ENCODE measurements at regions of chr7 and their contacts with region 1.

Region 1: DNA sequence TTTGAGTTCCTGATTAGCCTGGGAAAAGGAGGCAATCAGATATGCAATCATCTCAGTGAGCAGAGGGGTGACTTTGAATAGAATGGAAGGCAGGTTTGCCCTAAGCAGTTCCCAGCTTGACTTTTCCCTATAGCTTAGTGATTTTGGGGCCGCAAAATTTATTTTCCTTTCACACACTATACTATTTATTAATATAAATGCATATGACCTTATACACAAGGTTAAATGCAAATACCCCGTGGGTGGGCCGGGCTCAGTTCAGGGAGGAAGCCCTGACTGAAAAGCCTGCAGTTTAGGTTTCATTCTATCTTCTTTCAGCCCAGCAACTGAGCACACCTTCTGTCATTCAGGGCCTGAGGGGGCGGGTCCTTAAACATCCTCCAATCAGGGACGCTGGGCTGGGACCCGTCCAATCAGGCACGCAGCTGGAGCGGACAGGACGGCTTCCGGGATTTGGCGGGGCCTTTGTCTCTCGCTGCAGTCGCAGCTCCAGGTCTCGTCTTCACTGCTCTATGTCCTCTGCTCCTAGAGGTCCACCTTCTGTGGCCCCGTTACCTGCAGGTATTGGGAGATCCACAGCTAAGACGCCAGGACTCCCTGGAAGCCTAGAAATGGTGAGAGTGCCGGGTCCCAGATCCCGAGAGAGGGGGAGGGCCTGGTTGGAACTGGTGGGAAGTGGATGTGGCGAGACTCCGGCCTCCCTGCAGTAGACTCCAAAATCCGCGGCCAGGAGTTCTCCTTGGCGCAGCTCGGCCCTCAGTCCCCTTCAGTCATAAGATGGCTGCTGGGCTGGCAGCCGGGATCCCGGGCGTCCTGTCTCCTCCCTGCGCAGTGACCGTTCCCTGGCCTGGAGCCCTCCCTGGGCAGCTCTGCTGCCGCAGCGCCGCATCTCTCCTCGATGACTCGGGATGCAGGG is at the start of gene ZNF273:
- H3K4me3 ChIP-seq: peak within 1 kb of the TSS; percentile 78
- H3K27ac ChIP-seq: peak within 1 kb of the TSS; percentile 74
- H3K4me1 ChIP-seq: peaks cover 5% of the 10 kb centered on the region
- CTCF ChIP-seq: no peak

Region 2: DNA sequence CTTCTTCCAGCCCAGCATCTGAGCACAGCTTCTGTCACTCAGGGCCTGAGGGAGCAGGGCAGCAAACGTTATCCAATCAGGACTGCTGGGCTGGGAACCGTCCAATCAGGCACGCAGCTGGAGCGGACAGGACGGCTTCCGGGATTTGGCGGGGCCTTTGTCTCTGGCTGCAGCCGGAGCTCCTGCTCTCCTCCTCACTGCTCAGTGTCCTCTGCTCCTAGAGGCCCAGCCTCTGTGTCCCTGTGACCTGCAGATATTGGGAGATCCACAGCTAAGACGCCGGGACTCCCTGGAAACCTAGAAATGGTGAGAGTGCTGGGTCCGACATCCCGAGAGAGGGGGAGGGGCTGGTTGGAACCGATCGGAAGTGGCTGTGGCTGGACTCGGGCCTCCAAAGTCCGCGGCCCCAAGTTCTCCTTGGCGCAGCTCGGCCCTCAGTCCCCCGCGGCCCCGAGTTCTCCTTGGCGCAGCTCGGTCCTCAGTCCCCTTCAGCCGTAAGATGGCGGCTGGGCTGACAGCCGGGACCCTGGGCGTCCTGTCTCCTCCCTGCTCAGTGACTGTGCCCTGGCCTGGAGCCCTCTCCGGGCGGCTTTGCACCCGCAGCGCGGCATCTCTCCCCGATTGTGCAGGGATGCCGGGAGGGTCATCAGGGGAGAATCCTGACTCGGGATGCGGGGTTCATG is 236.9 kb before region 1 on chr7 and contains the start of gene ZNF107:
- CTCF ChIA-PET with region 1: no interaction called
- POLR2A ChIA-PET with region 1: interaction called, 11 read pairs
- H3K4me3 ChIP-seq: peak within 1 kb of the TSS; percentile 54
- H3K27ac ChIP-seq: peak within 1 kb of the TSS; percentile 75
- H3K4me1 ChIP-seq: peaks cover 3% of the 10 kb centered on the region; the same call in 1 of the 2 replicates
- CTCF ChIP-seq: no peak

Region 3: GRCh38 chr7:64832136-64832535 is 70.9 kb before region 1 on chr7:
- CTCF ChIA-PET with region 1: no interaction called
- POLR2A ChIA-PET with region 1: no interaction called
- H3K4me3 ChIP-seq: no peak overlapping the region
- H3K27ac ChIP-seq: no peak overlapping the region
- H3K4me1 ChIP-seq: no peaks in the 10 kb centered on the region
- CTCF ChIP-seq: no peak

Region 4: DNA sequence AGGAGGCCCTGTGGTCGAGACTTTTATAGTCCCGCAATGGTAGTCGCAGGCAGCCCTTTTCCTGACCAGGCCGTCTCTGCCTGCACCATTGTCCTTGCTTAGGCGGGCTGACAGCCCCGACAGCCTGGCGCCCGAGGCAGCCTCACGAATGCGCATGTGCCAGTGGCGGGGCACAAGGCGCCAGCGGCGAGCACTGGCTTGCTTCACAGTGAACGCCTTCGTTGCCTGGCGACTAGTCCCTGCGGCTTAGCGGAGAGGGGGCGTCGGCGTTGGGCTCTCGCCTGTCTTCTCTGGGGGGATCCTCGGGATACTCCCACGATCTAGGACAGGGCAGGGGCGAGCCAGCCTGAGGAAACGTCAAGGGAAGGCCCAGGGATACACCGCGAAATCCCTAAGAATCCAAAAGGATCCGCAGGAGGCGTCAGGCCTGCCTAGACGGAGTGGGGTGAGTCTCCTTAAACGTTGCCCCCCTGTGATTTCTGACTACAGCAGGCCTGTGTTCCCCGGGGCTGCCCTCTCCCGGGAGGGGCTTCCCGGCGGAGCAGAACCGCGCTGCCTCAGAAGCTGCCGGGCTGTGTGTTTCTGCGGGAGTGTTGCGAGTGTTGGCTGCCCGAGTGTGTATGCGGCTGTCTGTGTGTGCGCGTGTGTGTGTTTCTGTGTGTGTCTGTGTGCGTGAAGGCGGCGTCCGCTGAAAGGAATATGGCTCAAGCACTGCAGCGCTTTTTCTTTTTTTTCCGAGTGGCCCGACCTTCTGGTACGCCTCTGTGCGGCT is 20.5 kb before region 1 on chr7:
- CTCF ChIA-PET with region 1: no interaction called
- POLR2A ChIA-PET with region 1: no interaction called
- H3K4me3 ChIP-seq: no peak overlapping the region
- H3K27ac ChIP-seq: no peak overlapping the region
- H3K4me1 ChIP-seq: no peaks in the 10 kb centered on the region
- CTCF ChIP-seq: no peak

Region 5: GRCh38 chr7:64914557-64914956 is 11.5 kb after region 1 on chr7:
- CTCF ChIA-PET with region 1: no interaction called
- POLR2A ChIA-PET with region 1: interaction called, 12 read pairs
- H3K4me3 ChIP-seq: no peak overlapping the region
- H3K27ac ChIP-seq: no peak overlapping the region
- H3K4me1 ChIP-seq: no peaks in the 10 kb centered on the region
- CTCF ChIP-seq: no peak

Measured in HEK293 (cell line).